ENCODE measurements at regions of chr10 and their contacts with region 1.

Region 1: DNA sequence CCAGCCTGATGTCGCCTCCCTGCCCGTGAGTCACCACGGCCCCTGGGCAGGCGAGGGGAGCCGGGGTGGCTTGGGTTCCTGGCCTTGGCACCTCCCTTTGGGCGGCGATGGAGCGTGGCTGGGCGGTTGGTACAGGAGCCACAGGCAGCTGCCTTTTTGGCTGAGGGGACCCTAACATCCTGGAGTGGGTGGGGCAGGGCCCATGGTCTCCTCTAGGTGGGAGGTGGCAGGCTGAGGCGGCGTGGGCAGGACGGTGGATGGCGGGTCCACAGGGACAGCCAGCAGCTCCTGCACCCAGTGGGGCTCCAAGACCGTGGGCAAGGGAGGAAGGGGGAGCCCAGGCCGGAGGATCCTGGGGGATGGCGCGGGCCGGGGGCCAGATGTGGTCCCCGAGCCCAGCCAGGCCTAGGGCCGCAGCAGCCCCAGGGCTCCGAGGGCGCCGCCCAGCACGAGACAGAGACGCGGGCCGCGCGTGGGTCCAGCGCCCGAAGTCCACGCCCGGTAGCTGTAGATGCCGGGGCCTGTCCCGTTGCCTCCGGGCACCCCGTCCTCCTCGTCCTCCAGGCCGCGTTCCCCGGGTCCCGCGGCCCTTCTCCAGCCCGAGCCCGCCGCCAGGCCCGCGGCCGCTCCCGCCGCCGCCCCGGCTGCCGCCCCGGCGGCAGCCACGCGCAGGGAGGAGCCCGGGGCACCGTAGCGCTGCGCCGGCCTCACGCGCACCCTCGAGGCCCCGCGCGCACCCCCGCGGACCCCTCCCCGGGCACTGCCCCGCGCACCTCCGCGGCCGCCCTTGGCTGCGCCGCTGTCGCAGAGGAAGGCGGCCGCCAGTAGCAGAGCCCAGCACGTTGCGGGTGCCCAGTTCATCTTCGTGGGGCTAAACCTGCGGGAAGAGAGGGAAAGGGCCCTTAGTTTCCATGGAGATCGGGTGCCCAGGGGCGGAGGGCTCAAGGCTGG is 1.3 kb downstream of the SPRN start:
- DNase-seq: peak in 1 of 3 donors; percentile 50
- ATAC-seq: peak; percentile 13 to 31 (median 28)
- H3K4me3 ChIP-seq: no peak overlapping the region
- H3K27ac ChIP-seq: no peak overlapping the region
- H3K4me1 ChIP-seq: no peaks in the 10 kb centered on the region
- H3K27me3 ChIP-seq: no peaks in the 10 kb centered on the region
- CTCF ChIP-seq: no peak
- POLR2A ChIP-seq: no peak

Region 2: GRCh38 chr10:132421392-132421877 is 1001.7 kb before region 1 on chr10:
- intact Hi-C with region 1: no loop called
- DNase-seq: peak; percentile 65 to 75 (median 66)
- ATAC-seq: peak; percentile 67 to 76 (median 70)
- H3K4me3 ChIP-seq: no peak overlapping the region
- H3K27ac ChIP-seq: peak overlapping the region; percentile 72 to 88 (median 83)
- H3K4me1 ChIP-seq: peaks cover 0 to 6% (median 0%) of the 10 kb centered on the region in 4 donors
- H3K27me3 ChIP-seq: no peaks in the 10 kb centered on the region
- CTCF ChIP-seq: no peak
- POLR2A ChIP-seq: no peak

Region 3: GRCh38 chr10:133357285-133358151 is 65.6 kb before region 1 on chr10 and contains the start of gene FUOM:
- intact Hi-C with region 1: no loop called
- DNase-seq: peak; percentile 79 to 89 (median 83)
- ATAC-seq: peak; percentile 45 to 66 (median 59)
- H3K4me3 ChIP-seq: peak within 1 kb of the TSS; percentile 72 to 94 (median 79)
- H3K27ac ChIP-seq: peak within 1 kb of the TSS; percentile 65 to 85 (median 71)
- H3K4me1 ChIP-seq: peaks cover 0 to 73% (median 33%) of the 10 kb centered on the region in 4 donors
- H3K27me3 ChIP-seq: no peaks in the 10 kb centered on the region
- CTCF ChIP-seq: peak in 1 of 4 donors; percentile 21
- POLR2A ChIP-seq: no peak
- total RNA-seq, gene FUOM: 76.1 to 158 (median 124) TPM

Region 4: GRCh38 chr10:133565441-133566294 is 142.6 kb after region 1 on chr10 and contains the start of gene SYCE1:
- intact Hi-C with region 1: loop called in 1 of 2 experiments (anchors 10 kb)
- DNase-seq: peak; percentile 38 to 86 (median 67)
- ATAC-seq: peak in 3 of 4 donors; percentile 45 to 68 (median 50)
- H3K4me3 ChIP-seq: peak within 1 kb of the TSS in 2 of 3 donors; percentile 11 to 18
- H3K27ac ChIP-seq: no peak within 1 kb of the TSS
- H3K4me1 ChIP-seq: no peaks in the 10 kb centered on the region
- H3K27me3 ChIP-seq: no peaks in the 10 kb centered on the region
- CTCF ChIP-seq: no peak
- POLR2A ChIP-seq: no peak
- total RNA-seq, gene SYCE1: 0.37 to 4.1 (median 2.2) TPM in 5 of 6 experiments, not detected in the other

Region 5: GRCh38 chr10:133600657-133601056 is 177.6 kb after region 1 on chr10:
- intact Hi-C with region 1: no loop called
- DNase-seq: no peak
- ATAC-seq: no peak
- H3K4me3 ChIP-seq: no peak overlapping the region
- H3K27ac ChIP-seq: no peak overlapping the region
- H3K4me1 ChIP-seq: no peaks in the 10 kb centered on the region
- H3K27me3 ChIP-seq: no peaks in the 10 kb centered on the region
- CTCF ChIP-seq: no peak
- POLR2A ChIP-seq: no peak

Measured in right lobe of liver (tissue), 6 donors.